Activated CD8-positive, alpha-beta T cell treated with anti-CD3 and anti-CD28 coated beads for 36 hours (primary cell): ENCODE measurements at regions of chr7 and their contacts with region 1.

Region 1: DNA sequence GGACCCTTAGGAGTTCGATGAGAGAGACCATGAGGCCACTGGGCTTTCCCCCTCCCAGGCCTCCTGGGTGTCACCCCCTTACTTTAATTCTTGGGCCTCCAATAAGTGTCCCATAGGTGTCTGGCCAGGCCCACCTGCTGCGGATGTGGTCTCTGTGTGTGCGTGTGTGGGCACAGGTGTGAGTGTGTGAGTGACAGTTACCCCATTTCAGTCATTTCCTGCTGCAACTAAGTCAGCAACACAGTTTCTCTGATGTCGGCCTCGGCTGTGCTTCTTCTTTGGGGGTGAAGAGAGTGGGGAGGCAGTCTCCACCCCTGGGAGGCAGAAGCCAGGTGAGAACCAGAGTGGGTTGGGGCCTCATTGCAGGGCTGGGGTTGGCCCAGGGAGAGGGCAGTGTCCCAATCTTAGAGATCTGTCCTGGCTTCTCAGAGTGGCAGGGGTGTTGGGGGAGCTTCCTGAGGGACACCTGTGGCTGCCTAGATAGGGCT is 1.5 kb downstream of the PVRIG start:
- DNase-seq: peak; percentile 81
- ATAC-seq: peak; percentile 54
- H3K4me3 Mint-ChIP-seq: peak overlapping the region; percentile 97
- H3K27ac Mint-ChIP-seq: peak overlapping the region; percentile 99
- H3K4me1 Mint-ChIP-seq: peaks cover 49% of the 10 kb centered on the region
- H3K27me3 Mint-ChIP-seq: no peaks in the 10 kb centered on the region
- CTCF ChIP-seq: no peak

Region 2: DNA sequence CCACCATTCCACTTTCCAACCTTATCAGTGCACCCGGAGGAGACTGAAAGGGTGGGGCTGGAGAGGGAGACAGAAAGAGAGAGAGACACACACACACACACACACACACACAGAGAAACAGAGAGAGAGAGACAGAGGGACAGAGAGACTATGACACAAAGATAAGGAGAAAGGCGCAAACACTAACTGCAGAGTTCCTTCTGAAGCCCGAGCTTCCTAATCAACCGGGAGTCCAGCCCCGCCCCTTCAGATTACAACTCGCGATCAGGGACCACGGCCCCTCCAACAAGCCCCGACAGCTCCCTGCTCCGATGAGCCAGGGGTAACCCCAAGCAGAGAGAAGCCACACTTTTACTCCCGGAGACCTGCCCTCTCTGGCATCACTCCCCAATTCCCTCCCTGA is 53.4 kb before region 1 on chr7:
- CTCF ChIA-PET with region 1: interaction called, 10 read pairs
- POLR2A ChIA-PET with region 1: interaction called, 9 read pairs
- intact Hi-C with region 1: no loop called
- DNase-seq: no peak
- ATAC-seq: no peak
- H3K4me3 Mint-ChIP-seq: peak overlapping the region; percentile 74
- H3K27ac Mint-ChIP-seq: peak overlapping the region; percentile 80
- H3K4me1 Mint-ChIP-seq: peaks cover 74% of the 10 kb centered on the region
- H3K27me3 Mint-ChIP-seq: peaks cover 10% of the 10 kb centered on the region
- CTCF ChIP-seq: no peak

Region 3: GRCh38 chr7:100208911-100209408 is 12.3 kb before region 1 on chr7:
- CTCF ChIA-PET with region 1: interaction called, 11 read pairs
- POLR2A ChIA-PET with region 1: interaction called, 28 read pairs
- intact Hi-C with region 1: no loop called
- DNase-seq: peak; percentile 85
- ATAC-seq: peak; percentile 83
- H3K4me3 Mint-ChIP-seq: no peak overlapping the region
- H3K27ac Mint-ChIP-seq: peak overlapping the region; percentile 76
- H3K4me1 Mint-ChIP-seq: peaks cover 46% of the 10 kb centered on the region
- H3K27me3 Mint-ChIP-seq: no peaks in the 10 kb centered on the region
- CTCF ChIP-seq: no peak

Region 4: DNA sequence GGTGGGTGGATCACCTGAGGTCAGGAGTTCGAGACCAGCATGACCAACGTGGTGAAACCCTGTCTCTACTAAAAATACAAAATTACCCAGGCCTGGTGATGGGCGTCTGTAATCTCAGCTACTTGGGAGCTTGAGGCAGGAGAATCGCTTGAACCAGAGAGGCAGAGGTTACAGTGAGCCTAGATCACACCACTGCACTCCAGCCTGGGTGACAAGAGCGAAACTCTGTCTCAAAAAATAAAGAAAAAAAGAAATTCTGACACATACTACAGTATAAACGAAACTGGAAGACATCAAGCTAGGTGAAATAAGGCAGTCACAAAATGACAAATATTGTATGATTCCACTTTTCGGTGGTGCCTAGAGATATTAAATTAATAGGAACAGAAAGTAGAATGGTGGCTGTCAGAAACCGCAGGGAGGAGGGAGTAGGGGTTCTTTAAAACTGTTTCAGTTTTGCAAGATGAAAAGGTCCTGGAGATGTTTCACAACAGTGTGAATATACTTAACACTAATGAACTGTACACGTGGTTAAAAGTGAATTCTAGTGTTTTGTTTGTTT is 175.2 kb after region 1 on chr7:
- CTCF ChIA-PET with region 1: no interaction called
- POLR2A ChIA-PET with region 1: no interaction called
- intact Hi-C with region 1: no loop called
- DNase-seq: peak; percentile 87
- ATAC-seq: peak; percentile 93
- H3K4me3 Mint-ChIP-seq: no peak overlapping the region
- H3K27ac Mint-ChIP-seq: peak overlapping the region; percentile 50
- H3K4me1 Mint-ChIP-seq: peaks cover 18% of the 10 kb centered on the region
- H3K27me3 Mint-ChIP-seq: peaks cover 7% of the 10 kb centered on the region
- CTCF ChIP-seq: no peak

Region 5: DNA sequence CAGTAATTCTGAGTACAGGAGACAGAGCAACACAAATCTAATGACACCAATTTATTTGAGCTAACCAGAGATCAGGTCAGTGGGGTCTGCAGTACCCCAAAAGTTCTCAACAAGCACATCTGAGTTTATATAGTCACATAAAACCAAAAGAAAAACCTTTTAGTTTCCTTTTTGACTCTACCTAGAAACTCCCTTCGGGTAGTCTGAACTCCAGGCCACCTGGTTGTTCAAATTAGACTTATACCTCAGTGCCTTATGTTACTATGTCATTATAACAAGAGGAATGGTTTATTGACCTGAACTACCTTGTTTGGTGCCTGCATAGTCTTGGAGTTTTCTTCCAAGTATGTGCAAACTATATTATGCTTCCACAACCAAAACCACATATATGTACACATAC is 192.6 kb after region 1 on chr7:
- CTCF ChIA-PET with region 1: no interaction called
- POLR2A ChIA-PET with region 1: no interaction called
- intact Hi-C with region 1: no loop called
- DNase-seq: no peak
- ATAC-seq: no peak
- H3K4me3 Mint-ChIP-seq: no peak overlapping the region
- H3K27ac Mint-ChIP-seq: no peak overlapping the region
- H3K4me1 Mint-ChIP-seq: no peaks in the 10 kb centered on the region
- H3K27me3 Mint-ChIP-seq: no peaks in the 10 kb centered on the region
- CTCF ChIP-seq: no peak